ENCODE measurements at regions of chr17 and their contacts with region 1.

Region 1: GRCh38 chr17:49230636-49231562 is at the start of gene PHOSPHO1:
- DNase-seq: peak; percentile 88
- H3K4me3 Mint-ChIP-seq: peak within 1 kb of the TSS; percentile 71
- H3K27ac Mint-ChIP-seq: no peak within 1 kb of the TSS
- H3K4me1 Mint-ChIP-seq: peaks cover 13% of the 10 kb centered on the region
- H3K27me3 Mint-ChIP-seq: peaks cover 28% of the 10 kb centered on the region
- total RNA-seq, gene PHOSPHO1: not detected

Region 2: GRCh38 chr17:49210158-49211029 is 20.5 kb before region 1 on chr17 and contains the starts of genes ABI3 and GNGT2:
- CTCF ChIA-PET with region 1: interaction called, 9 read pairs
- POLR2A ChIA-PET with region 1: interaction called, 41 read pairs
- DNase-seq: peak; percentile 74
- H3K4me3 Mint-ChIP-seq: peak within 1 kb of the TSS; percentile 90
- H3K27ac Mint-ChIP-seq: peak within 1 kb of the TSS; percentile 86
- H3K4me1 Mint-ChIP-seq: peaks cover 64% of the 10 kb centered on the region
- H3K27me3 Mint-ChIP-seq: no peaks in the 10 kb centered on the region
- total RNA-seq, gene ABI3: 46.3 to 48.2 TPM
- total RNA-seq, gene GNGT2: 22.7 to 23.8 TPM

Region 3: GRCh38 chr17:49217651-49218413 is 13.1 kb before region 1 on chr17:
- CTCF ChIA-PET with region 1: interaction called, 9 read pairs
- POLR2A ChIA-PET with region 1: interaction called, 41 read pairs
- DNase-seq: peak; percentile 79
- H3K4me3 Mint-ChIP-seq: peak overlapping the region; percentile 64
- H3K27ac Mint-ChIP-seq: peak overlapping the region; percentile 95
- H3K4me1 Mint-ChIP-seq: peaks cover 71% of the 10 kb centered on the region
- H3K27me3 Mint-ChIP-seq: no peaks in the 10 kb centered on the region

Measured in activated CD4-positive, alpha-beta memory T cell treated with anti-CD3 and anti-CD28 coated beads, Interleukin-2, amount 10 ng/mL, durations not matched to agents 7 days and 5 days (primary cell).